Heart left ventricle (tissue), 16 donors: ENCODE measurements at regions of chr1 and their contacts with region 1.

Region 1: DNA sequence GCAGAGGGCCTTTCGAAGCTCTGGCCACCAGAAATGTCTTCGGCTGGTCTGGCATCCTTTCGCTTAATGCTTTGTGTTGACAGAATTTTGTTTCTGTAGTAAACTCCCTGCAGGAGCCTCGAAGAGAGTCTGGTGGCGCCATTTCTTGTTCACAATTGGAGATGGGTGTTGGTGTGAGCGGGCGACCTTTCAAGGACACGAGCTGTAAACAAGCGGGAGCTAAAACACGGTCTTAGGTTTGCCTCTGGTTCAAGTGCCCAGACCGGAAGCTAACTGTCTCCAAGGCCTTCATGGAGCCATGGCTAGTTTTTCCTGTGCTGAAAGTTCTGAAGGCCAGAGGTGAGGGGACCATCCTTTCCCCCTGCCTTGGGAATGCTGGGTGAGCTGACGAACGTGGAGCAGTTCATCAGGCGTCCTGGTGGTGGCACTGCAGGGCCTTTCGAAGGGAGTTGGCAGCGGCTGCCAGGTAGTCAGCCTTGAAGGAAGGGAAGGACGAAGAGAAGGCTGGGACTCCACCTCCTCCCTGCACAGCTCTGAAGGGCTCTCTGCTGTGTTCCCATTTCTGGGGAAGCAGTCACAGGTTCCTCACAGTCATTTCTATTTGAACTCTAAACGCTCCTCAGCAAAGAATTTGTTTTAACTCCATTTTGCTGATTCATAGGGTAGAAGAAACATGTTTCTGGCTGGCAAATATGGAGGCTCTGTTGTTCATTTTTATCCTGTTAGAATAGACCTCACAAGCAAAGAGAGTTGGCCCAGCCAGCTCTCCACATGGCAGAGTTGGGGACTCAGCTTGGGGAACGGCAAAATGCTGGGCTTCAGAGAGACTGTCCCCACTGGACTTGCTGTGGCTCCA is 35.2 kb downstream of the URB2 start:
- DNase-seq: peak; percentile 78 to 89 (median 81)
- ATAC-seq: peak; percentile 80 to 95 (median 92)
- H3K4me3 ChIP-seq: no peak overlapping the region
- H3K27ac ChIP-seq: no peak overlapping the region
- H3K4me1 ChIP-seq: peaks cover 0 to 6% (median 0%) of the 10 kb centered on the region in 12 donors
- H3K27me3 ChIP-seq: no peaks in the 10 kb centered on the region
- CTCF ChIP-seq: peak; percentile 75 to 92 (median 88)
- POLR2A ChIP-seq: no peak

Region 2: DNA sequence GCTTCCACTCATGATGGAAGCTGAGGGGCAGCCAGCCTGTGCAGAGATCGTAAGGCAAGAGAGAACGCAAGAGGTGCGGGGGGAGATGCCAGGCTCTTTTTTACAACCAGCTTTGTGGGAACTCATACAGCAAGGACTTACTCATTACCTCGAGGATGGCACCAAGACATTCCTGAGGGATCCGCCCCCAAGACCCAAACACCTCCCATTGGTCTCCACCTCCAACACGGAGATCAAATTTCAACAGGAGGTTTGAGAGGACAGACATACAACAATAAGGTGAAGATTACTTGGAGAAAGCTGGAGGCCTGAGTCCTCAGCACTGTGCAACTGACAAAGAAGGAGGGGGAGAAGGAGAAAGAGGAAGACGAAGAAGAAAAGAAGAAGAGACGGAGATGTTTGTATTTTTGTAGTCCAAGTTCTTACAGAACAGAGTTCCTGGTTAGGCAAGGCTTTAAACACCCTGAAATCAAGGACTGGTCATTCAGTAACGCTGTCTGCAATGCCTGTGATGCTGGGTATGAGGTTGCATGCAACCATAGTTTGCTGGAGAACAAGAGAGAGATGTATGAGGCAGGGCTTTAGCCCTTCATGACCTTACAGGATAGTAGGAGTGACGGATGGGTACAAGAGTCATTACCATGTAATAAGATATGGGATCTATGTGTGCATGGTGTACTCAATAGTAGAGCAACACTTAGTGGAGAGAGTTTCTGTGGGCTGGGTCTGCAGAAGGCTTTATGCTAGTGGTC is 386.0 kb after region 1 on chr1:
- intact Hi-C with region 1: no loop called
- DNase-seq: no peak
- ATAC-seq: no peak
- H3K4me3 ChIP-seq: no peak overlapping the region
- H3K27ac ChIP-seq: no peak overlapping the region
- H3K4me1 ChIP-seq: no peaks in the 10 kb centered on the region
- H3K27me3 ChIP-seq: no peaks in the 10 kb centered on the region
- CTCF ChIP-seq: no peak
- POLR2A ChIP-seq: no peak

Region 3: DNA sequence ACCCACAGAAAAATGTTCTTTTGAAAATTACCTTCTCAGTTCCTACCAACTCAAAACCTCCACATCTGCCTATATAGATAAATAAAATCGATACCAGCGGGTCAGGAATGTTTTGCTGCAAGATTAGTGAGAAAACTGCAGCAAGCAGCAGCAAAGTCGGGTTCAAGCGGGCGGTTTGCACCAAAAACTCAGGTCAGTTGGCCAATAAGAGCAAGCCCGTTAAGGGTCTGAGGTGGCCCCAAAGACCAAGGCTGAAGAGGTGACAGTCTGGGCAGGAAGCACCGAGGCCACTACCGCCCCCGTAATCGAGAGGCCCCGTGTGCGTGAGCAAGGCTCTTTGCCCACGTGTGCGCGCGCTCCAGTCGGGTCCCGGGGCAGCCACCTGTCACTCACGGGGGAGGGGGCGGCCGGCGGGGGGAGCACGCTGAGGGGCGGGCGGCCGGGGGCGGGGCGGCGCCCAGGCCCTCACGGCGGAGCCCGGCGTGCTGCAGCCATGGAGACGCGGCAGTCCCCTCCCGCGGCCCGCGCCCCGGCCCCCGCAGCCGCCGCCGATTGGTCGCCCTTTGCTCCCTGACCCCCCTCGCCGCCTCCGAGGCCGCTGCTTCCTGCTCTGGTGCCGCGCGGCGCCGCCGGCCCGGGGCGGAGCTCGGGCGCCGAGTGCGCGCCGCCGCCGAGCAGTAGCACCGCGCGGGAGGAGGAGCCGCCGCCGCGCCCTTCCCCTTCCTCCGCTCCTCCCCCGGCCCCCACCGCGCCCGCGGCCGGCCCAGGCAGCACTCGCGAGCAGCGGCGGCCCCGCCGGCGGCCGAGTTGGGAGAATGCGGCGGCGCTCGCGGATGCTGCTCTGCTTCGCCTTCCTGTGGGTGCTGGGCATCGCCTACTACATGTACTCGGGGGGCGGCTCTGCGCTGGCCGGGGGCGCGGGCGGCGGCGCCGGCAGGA is 405.5 kb after region 1 on chr1 and contains the start of gene GALNT2:
- intact Hi-C with region 1: loop called in 2 of 10 experiments (anchors 5 to 10 kb)
- DNase-seq: peak; percentile 92 to 94 (median 93)
- ATAC-seq: peak; percentile 88 to 98 (median 94)
- H3K4me3 ChIP-seq: peak within 1 kb of the TSS; percentile 63 to 97 (median 84)
- H3K27ac ChIP-seq: peak within 1 kb of the TSS; percentile 79 to 92 (median 88)
- H3K4me1 ChIP-seq: peaks cover 0 to 48% (median 22%) of the 10 kb centered on the region in 12 donors
- H3K27me3 ChIP-seq: no peaks in the 10 kb centered on the region
- CTCF ChIP-seq: no peak
- POLR2A ChIP-seq: peak; percentile 57 to 80
- total RNA-seq, gene GALNT2: 21.0 to 44.9 (median 31.6) TPM

Region 4: GRCh38 chr1:230167419-230167852 is 506.2 kb after region 1 on chr1:
- intact Hi-C with region 1: loop called in 1 of 10 experiments (anchors 5 kb)
- DNase-seq: peak in 1 of 5 donors; percentile 7
- ATAC-seq: peak in 3 of 4 donors; percentile 21 to 58 (median 38)
- H3K4me3 ChIP-seq: no peak overlapping the region
- H3K27ac ChIP-seq: no peak overlapping the region
- H3K4me1 ChIP-seq: peaks cover 0 to 50% (median 12%) of the 10 kb centered on the region in 12 donors
- H3K27me3 ChIP-seq: no peaks in the 10 kb centered on the region
- CTCF ChIP-seq: peak; percentile 52 to 76 (median 56)
- POLR2A ChIP-seq: no peak

Region 5: DNA sequence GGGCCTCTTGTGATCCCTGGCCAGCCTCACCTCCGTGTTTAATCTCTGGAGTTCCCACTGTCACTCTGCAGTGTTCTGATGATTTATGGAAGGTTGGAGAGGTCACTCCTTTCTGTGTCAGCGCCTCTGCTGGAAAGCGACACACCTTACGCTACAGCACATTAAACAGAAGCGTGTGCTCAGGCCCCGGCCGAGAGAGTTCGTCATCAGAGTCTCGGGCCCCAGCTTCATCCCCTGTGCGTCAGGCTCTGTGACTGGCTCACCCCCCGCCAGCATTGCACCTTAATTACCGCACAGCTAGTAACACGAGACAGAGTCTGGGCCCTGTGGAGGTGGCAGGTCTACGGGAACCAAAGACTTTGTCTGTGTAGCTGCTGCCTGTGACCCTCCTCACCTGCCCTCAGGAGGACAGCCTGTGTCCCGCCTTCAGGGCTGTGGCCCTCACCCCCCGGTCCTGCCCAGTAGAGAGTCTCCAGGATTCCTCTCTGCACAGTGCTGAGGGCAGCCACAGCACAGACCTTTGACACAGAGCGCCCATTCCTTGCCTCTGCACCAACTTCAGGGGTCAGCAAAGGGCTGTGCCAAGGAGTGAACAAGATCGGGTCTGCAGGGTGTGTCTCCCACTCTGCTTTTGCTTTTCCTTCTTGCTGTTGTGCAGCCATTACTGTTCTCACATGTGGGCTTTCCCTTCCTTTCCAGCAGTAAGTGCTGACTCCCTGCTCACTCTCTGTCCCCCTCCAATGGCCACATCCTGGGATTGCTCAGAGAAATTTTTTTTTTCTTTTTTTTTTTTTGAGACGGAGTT is 607.3 kb after region 1 on chr1:
- intact Hi-C with region 1: loop called in 3 of 10 experiments (anchors 5 kb)
- DNase-seq: peak in 2 of 5 donors; percentile 37 to 48
- ATAC-seq: peak; percentile 45 to 79 (median 72)
- H3K4me3 ChIP-seq: no peak overlapping the region
- H3K27ac ChIP-seq: peak overlapping the region in 2 of 12 donors; percentile 32 to 48
- H3K4me1 ChIP-seq: peaks cover 0 to 32% (median 17%) of the 10 kb centered on the region in 12 donors
- H3K27me3 ChIP-seq: no peaks in the 10 kb centered on the region
- CTCF ChIP-seq: peak; percentile 37 to 71 (median 56)
- POLR2A ChIP-seq: no peak

Region 6: DNA sequence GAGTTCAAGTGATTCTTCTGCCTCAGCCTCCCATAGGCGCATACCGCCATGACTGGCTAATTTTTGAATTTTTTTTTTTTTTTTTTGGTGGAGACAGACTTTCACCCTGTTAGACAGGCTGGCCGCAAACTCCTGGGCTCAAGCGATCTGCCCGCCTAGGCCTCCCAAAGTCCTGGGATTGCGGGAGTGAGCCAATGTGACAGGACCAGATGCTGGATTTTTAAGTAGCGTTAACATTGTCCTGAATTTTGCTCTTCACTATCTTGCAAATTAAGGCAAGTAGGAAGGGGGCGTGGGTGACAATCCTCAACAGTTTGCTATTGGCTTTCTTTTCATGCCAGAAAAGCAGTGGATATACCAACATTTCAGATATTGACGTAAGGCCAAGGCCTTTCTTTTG is 1817.5 kb after region 1 on chr1:
- intact Hi-C with region 1: no loop called
- DNase-seq: no peak
- ATAC-seq: no peak
- H3K4me3 ChIP-seq: no peak overlapping the region
- H3K27ac ChIP-seq: no peak overlapping the region
- H3K4me1 ChIP-seq: no peaks in the 10 kb centered on the region
- H3K27me3 ChIP-seq: no peaks in the 10 kb centered on the region
- CTCF ChIP-seq: no peak
- POLR2A ChIP-seq: no peak